ENCODE measurements at regions of chr2 and their contacts with region 1.

Region 1: GRCh38 chr2:171703574-171704347 is 16.5 kb downstream of the DYNC1I2 start:
- DNase-seq: peak in 5 of 9 donors; percentile 10 to 35 (median 22)
- ATAC-seq: peak; percentile 61
- H3K4me3 ChIP-seq: no peak overlapping the region
- H3K4me3 Mint-ChIP-seq: no peak overlapping the region
- H3K27ac ChIP-seq: no peak overlapping the region
- H3K27ac Mint-ChIP-seq: peak overlapping the region in 6 of 9 donors; percentile 43 to 79 (median 66)
- H3K4me1 ChIP-seq: no peaks in the 10 kb centered on the region
- H3K4me1 Mint-ChIP-seq: peaks cover 2 to 34% (median 11%) of the 10 kb centered on the region in 7 donors
- H3K27me3 ChIP-seq: no peaks in the 10 kb centered on the region
- H3K27me3 Mint-ChIP-seq: no peaks in the 10 kb centered on the region

Region 2: DNA sequence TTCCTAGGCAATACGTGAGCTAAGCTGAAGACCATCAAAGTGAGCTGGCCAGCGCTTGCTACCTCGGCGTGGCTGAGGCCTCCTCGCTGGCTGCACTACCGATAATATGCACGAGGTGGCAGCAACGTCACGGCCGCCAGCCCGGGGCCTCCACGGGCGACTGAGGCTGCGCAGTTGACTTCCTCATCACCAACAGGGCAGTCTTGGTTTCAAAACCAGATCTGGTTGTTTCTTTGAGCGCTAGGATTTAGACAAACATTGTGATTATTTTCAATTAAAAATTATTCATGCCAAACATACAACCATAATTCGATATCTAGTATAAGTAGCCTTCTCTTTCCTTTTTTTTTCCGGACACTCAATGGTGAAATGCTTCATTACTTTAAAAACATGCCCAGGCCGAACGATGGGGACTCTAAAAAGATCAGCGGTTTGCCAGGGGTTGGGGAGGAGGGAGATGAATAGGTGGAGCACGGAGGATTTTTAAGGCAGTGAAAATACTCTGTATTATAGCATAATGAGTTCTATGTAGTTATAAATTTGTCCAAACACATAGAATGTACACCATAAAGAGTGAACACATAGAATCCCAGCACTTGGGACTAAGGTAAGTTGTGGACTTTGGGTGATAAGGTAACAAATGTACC is 129.5 kb before region 1 on chr2:
- CTCF ChIA-PET with region 1: interaction called, 3 read pairs
- POLR2A ChIA-PET with region 1: no interaction called
- intact Hi-C with region 1: loop called (anchors 1 to 10 kb)
- DNase-seq: peak; percentile 50 to 84 (median 73)
- ATAC-seq: peak; percentile 99
- H3K4me3 ChIP-seq: no peak overlapping the region
- H3K4me3 Mint-ChIP-seq: peak overlapping the region in 6 of 10 donors; percentile 13 to 69 (median 16)
- H3K27ac ChIP-seq: no peak overlapping the region
- H3K27ac Mint-ChIP-seq: peak overlapping the region in 2 of 9 donors; percentile 31 to 60
- H3K4me1 ChIP-seq: peaks cover 0 to 3% of the 10 kb centered on the region in 2 donors
- H3K4me1 Mint-ChIP-seq: peaks cover 0 to 7% (median 6%) of the 10 kb centered on the region in 7 donors
- H3K27me3 ChIP-seq: no peaks in the 10 kb centered on the region
- H3K27me3 Mint-ChIP-seq: peaks cover 0 to 8% (median 0%) of the 10 kb centered on the region in 5 donors

Region 3: GRCh38 chr2:171598713-171599319 is 104.9 kb before region 1 on chr2:
- CTCF ChIA-PET with region 1: no interaction called
- POLR2A ChIA-PET with region 1: no interaction called
- intact Hi-C with region 1: loop called in 1 of 2 experiments (anchors 2 kb)
- DNase-seq: peak in 7 of 9 donors; percentile 22 to 64 (median 51)
- ATAC-seq: peak; percentile 94
- H3K4me3 ChIP-seq: no peak overlapping the region
- H3K4me3 Mint-ChIP-seq: no peak overlapping the region
- H3K27ac ChIP-seq: no peak overlapping the region
- H3K27ac Mint-ChIP-seq: no peak overlapping the region
- H3K4me1 ChIP-seq: peaks cover 0 to 3% of the 10 kb centered on the region in 2 donors
- H3K4me1 Mint-ChIP-seq: peaks cover 0 to 6% (median 0%) of the 10 kb centered on the region in 7 donors
- H3K27me3 ChIP-seq: no peaks in the 10 kb centered on the region
- H3K27me3 Mint-ChIP-seq: peaks cover 0 to 25% (median 4%) of the 10 kb centered on the region in 5 donors

Region 4: GRCh38 chr2:171652416-171652785 is 51.4 kb before region 1 on chr2:
- CTCF ChIA-PET with region 1: no interaction called
- POLR2A ChIA-PET with region 1: no interaction called
- intact Hi-C with region 1: no loop called
- DNase-seq: no peak
- ATAC-seq: no peak
- H3K4me3 ChIP-seq: no peak overlapping the region
- H3K4me3 Mint-ChIP-seq: no peak overlapping the region
- H3K27ac ChIP-seq: no peak overlapping the region
- H3K27ac Mint-ChIP-seq: no peak overlapping the region
- H3K4me1 ChIP-seq: no peaks in the 10 kb centered on the region
- H3K4me1 Mint-ChIP-seq: no peaks in the 10 kb centered on the region
- H3K27me3 ChIP-seq: no peaks in the 10 kb centered on the region
- H3K27me3 Mint-ChIP-seq: peaks cover 40 to 70% (median 51%) of the 10 kb centered on the region in 5 donors

Region 5: DNA sequence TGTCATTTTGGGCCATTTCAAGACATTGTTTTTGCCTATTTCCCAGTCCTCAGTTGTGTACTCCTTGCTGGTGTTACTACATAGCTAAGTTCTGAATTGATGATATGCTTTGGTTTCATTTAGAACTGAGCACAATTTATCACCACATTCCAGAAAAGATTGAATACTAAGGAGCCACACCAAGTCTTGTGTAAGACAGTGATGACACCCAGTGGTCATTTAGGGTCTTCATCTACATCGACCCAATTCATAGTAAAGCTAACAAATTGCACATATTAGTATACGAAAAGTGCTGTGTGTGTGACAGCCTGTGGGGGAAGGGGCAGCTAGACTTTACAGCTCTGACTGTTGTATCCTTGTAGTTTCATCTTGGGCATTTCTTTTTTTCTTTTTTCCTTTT is 409.9 kb after region 1 on chr2:
- CTCF ChIA-PET with region 1: interaction called, 7 read pairs
- POLR2A ChIA-PET with region 1: no interaction called
- intact Hi-C with region 1: loop called in 1 of 2 experiments (anchors 1 kb)
- DNase-seq: peak in 1 of 9 donors; percentile 4
- ATAC-seq: no peak
- H3K4me3 ChIP-seq: no peak overlapping the region
- H3K4me3 Mint-ChIP-seq: no peak overlapping the region
- H3K27ac ChIP-seq: no peak overlapping the region
- H3K27ac Mint-ChIP-seq: no peak overlapping the region
- H3K4me1 ChIP-seq: no peaks in the 10 kb centered on the region
- H3K4me1 Mint-ChIP-seq: peaks cover 0 to 10% (median 3%) of the 10 kb centered on the region in 7 donors
- H3K27me3 ChIP-seq: peaks cover 0 to 2% of the 10 kb centered on the region in 2 donors
- H3K27me3 Mint-ChIP-seq: peaks cover 43 to 57% (median 45%) of the 10 kb centered on the region in 5 donors

Region 6: GRCh38 chr2:172131713-172132555 is 428.2 kb after region 1 on chr2:
- CTCF ChIA-PET with region 1: interaction called, 3 read pairs
- POLR2A ChIA-PET with region 1: no interaction called
- intact Hi-C with region 1: loop called (anchors 1 kb)
- DNase-seq: no peak
- ATAC-seq: no peak
- H3K4me3 ChIP-seq: no peak overlapping the region
- H3K4me3 Mint-ChIP-seq: no peak overlapping the region
- H3K27ac ChIP-seq: no peak overlapping the region
- H3K27ac Mint-ChIP-seq: no peak overlapping the region
- H3K4me1 ChIP-seq: no peaks in the 10 kb centered on the region
- H3K4me1 Mint-ChIP-seq: no peaks in the 10 kb centered on the region
- H3K27me3 ChIP-seq: no peaks in the 10 kb centered on the region
- H3K27me3 Mint-ChIP-seq: peaks cover 0 to 34% (median 7%) of the 10 kb centered on the region in 5 donors

Region 7: GRCh38 chr2:172226244-172227061 is 522.7 kb after region 1 on chr2:
- CTCF ChIA-PET with region 1: interaction called, 10 read pairs
- POLR2A ChIA-PET with region 1: no interaction called
- intact Hi-C with region 1: no loop called
- DNase-seq: peak in 7 of 9 donors; percentile 32 to 51 (median 37)
- ATAC-seq: peak; percentile 78
- H3K4me3 ChIP-seq: no peak overlapping the region
- H3K4me3 Mint-ChIP-seq: no peak overlapping the region
- H3K27ac ChIP-seq: no peak overlapping the region
- H3K27ac Mint-ChIP-seq: peak overlapping the region in 4 of 9 donors; percentile 2 to 44 (median 36)
- H3K4me1 ChIP-seq: peaks cover 0 to 45% of the 10 kb centered on the region in 2 donors
- H3K4me1 Mint-ChIP-seq: peaks cover 42 to 71% (median 64%) of the 10 kb centered on the region in 7 donors
- H3K27me3 ChIP-seq: no peaks in the 10 kb centered on the region
- H3K27me3 Mint-ChIP-seq: peaks cover 0 to 6% (median 0%) of the 10 kb centered on the region in 5 donors

Region 8: GRCh38 chr2:172596776-172597175 is 893.0 kb after region 1 on chr2:
- CTCF ChIA-PET with region 1: no interaction called
- POLR2A ChIA-PET with region 1: no interaction called
- intact Hi-C with region 1: loop called in 1 of 2 experiments (anchors 10 kb)
- DNase-seq: no peak
- ATAC-seq: no peak
- H3K4me3 ChIP-seq: no peak overlapping the region
- H3K4me3 Mint-ChIP-seq: no peak overlapping the region
- H3K27ac ChIP-seq: no peak overlapping the region
- H3K27ac Mint-ChIP-seq: no peak overlapping the region
- H3K4me1 ChIP-seq: no peaks in the 10 kb centered on the region
- H3K4me1 Mint-ChIP-seq: peaks cover 2 to 56% (median 35%) of the 10 kb centered on the region in 7 donors
- H3K27me3 ChIP-seq: no peaks in the 10 kb centered on the region
- H3K27me3 Mint-ChIP-seq: no peaks in the 10 kb centered on the region